CD8-positive, alpha-beta T cell (primary cell): ENCODE measurements at regions of chr1 and their contacts with region 1.

Region 1: GRCh38 chr1:209860293-209860881 is 32.6 kb downstream of the UTP25 start:
- DNase-seq: peak; percentile 29 to 83 (median 70)
- ATAC-seq: peak; percentile 82
- H3K4me3 ChIP-seq: no peak overlapping the region
- H3K4me3 Mint-ChIP-seq: no peak overlapping the region
- H3K27ac ChIP-seq: no peak overlapping the region
- H3K27ac Mint-ChIP-seq: no peak overlapping the region
- H3K4me1 ChIP-seq: no peaks in the 10 kb centered on the region
- H3K4me1 Mint-ChIP-seq: no peaks in the 10 kb centered on the region
- H3K27me3 ChIP-seq: no peaks in the 10 kb centered on the region
- H3K27me3 Mint-ChIP-seq: peaks cover 19% of the 10 kb centered on the region
- CTCF ChIP-seq: peak; percentile 93

Region 2: GRCh38 chr1:209989525-209989924 is 129.1 kb after region 1 on chr1:
- CTCF ChIA-PET with region 1: interaction called, 3 read pairs
- POLR2A ChIA-PET with region 1: no interaction called
- intact Hi-C with region 1: loop called (anchors 1 to 5 kb)
- DNase-seq: no peak
- ATAC-seq: no peak
- H3K4me3 ChIP-seq: no peak overlapping the region
- H3K4me3 Mint-ChIP-seq: no peak overlapping the region
- H3K27ac ChIP-seq: no peak overlapping the region
- H3K27ac Mint-ChIP-seq: no peak overlapping the region
- H3K4me1 ChIP-seq: no peaks in the 10 kb centered on the region
- H3K4me1 Mint-ChIP-seq: no peaks in the 10 kb centered on the region
- H3K27me3 ChIP-seq: no peaks in the 10 kb centered on the region
- H3K27me3 Mint-ChIP-seq: peaks cover 25% of the 10 kb centered on the region
- CTCF ChIP-seq: no peak

Region 3: GRCh38 chr1:210311726-210312493 is 451.5 kb after region 1 on chr1:
- CTCF ChIA-PET with region 1: interaction called, 42 read pairs
- POLR2A ChIA-PET with region 1: interaction called, 5 read pairs
- intact Hi-C with region 1: loop called in 1 of 2 experiments (anchors 1 kb)
- DNase-seq: no peak
- ATAC-seq: no peak
- H3K4me3 ChIP-seq: no peak overlapping the region
- H3K4me3 Mint-ChIP-seq: peak overlapping the region; percentile 91
- H3K27ac ChIP-seq: no peak overlapping the region
- H3K27ac Mint-ChIP-seq: no peak overlapping the region
- H3K4me1 ChIP-seq: no peaks in the 10 kb centered on the region
- H3K4me1 Mint-ChIP-seq: peaks cover 8% of the 10 kb centered on the region
- H3K27me3 ChIP-seq: no peaks in the 10 kb centered on the region
- H3K27me3 Mint-ChIP-seq: peaks cover 20% of the 10 kb centered on the region
- CTCF ChIP-seq: no peak

Region 4: DNA sequence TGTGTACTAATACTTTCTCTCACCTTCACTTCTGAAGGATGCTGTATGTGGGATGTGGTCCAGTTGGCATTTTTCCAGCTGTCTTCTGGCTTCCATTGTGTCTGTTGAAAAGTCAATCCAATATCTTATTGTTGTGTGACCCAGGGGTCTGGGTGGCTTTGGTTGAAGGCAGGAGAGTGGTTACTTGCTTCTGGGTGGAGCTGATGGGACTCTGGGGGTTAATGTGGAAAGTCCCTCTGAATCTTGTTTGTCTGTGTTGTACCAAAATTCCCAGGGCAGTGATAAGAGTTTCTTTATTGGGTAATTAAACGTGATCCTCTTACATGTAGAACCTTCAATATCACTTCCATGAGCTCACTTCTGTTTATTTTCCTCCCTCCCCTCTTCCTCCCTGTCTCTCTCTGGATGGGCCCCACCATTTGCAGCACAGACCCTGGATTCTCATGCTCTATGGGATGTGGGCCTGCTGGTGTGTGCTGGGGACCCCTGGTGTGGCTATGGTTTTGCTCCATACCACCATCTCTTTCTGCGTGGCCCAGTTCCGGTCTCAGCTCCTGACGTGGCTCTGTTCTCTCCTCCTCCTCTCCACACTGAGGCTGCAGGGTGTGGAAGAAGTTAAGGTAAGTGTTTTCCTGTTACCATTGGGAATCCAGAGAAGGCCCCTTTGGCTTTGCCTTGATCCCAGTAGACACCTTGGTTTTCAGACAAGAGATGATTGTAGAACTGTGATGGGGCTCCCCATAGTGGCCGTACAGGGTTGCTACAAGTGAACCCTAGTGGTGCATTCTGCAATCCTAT is 539.9 kb after region 1 on chr1:
- CTCF ChIA-PET with region 1: no interaction called
- POLR2A ChIA-PET with region 1: no interaction called
- intact Hi-C with region 1: loop called in 1 of 2 experiments (anchors 2 kb)
- DNase-seq: peak in 7 of 9 experiments; percentile 14 to 60 (median 23)
- ATAC-seq: peak; percentile 75
- H3K4me3 ChIP-seq: no peak overlapping the region
- H3K4me3 Mint-ChIP-seq: no peak overlapping the region
- H3K27ac ChIP-seq: no peak overlapping the region
- H3K27ac Mint-ChIP-seq: no peak overlapping the region
- H3K4me1 ChIP-seq: no peaks in the 10 kb centered on the region
- H3K4me1 Mint-ChIP-seq: peaks cover 18% of the 10 kb centered on the region
- H3K27me3 ChIP-seq: no peaks in the 10 kb centered on the region
- H3K27me3 Mint-ChIP-seq: no peaks in the 10 kb centered on the region
- CTCF ChIP-seq: peak; percentile 66